PC-3 (cell line): ENCODE measurements at regions of chr1 and their contacts with region 1.

Region 1: DNA sequence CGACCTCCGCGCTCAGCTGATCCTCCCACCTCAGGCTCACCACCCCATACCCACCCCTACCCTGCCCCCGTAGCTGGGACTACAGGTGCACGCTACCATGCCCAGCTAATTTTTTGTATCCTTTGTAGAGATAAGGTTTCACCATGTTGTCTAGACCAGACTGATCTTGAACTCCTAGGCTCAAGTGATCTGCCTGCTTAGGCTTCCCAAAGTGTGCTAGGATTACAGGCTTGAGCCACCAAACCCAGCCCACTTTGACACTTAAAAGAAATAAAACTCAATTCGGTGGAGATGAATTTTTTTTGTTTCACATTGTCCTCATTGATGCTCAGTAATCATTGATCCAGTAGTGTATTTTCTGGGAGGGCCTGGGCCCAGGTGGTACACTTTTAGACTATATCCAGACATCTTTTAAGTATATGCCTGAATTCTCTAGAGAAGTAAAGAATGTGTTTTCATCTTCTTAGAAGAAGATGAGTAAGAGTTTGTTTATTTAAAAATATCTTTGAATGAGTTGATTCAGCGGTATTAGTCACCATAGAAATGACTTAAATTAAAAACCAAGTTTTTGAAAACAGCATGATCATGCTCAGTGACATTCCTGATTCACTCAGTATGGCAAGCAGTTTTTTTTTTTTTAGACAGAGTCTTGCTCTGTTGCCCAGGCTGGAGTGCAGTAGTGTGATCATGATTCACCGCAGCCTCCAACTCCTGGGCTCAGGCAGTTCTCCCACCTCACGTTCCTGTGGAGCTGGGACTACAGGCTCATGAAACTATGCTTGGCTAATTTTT is 57.8 kb downstream of the EPB41 start:
- DNase-seq: peak; percentile 94
- ATAC-seq: peak; percentile 88
- H3K4me3 ChIP-seq: no peak overlapping the region
- H3K27ac ChIP-seq: peak overlapping the region; percentile 82
- H3K4me1 ChIP-seq: peaks cover 32% of the 10 kb centered on the region
- H3K27me3 ChIP-seq: no peaks in the 10 kb centered on the region
- CTCF ChIP-seq: no peak

Region 2: GRCh38 chr1:28860332-28861073 is 111.7 kb before region 1 on chr1:
- CTCF ChIA-PET with region 1: no interaction called
- POLR2A ChIA-PET with region 1: no interaction called
- intact Hi-C with region 1: no loop called
- DNase-seq: peak; percentile 58
- ATAC-seq: peak; percentile 49; the same call in 1 of the 2 replicates
- H3K4me3 ChIP-seq: no peak overlapping the region
- H3K27ac ChIP-seq: no peak overlapping the region
- H3K4me1 ChIP-seq: no peaks in the 10 kb centered on the region
- H3K27me3 ChIP-seq: no peaks in the 10 kb centered on the region
- CTCF ChIP-seq: no peak

Region 3: GRCh38 chr1:28914228-28915030 is 57.7 kb before region 1 on chr1 and contains the start of gene EPB41:
- CTCF ChIA-PET with region 1: no interaction called
- POLR2A ChIA-PET with region 1: no interaction called
- intact Hi-C with region 1: loop called (anchors 2 kb)
- DNase-seq: peak; percentile 92
- ATAC-seq: peak; percentile 88
- H3K4me3 ChIP-seq: peak within 1 kb of the TSS; percentile 75
- H3K27ac ChIP-seq: peak within 1 kb of the TSS; percentile 28
- H3K4me1 ChIP-seq: peaks cover 14% of the 10 kb centered on the region
- H3K27me3 ChIP-seq: no peaks in the 10 kb centered on the region
- CTCF ChIP-seq: no peak
- total RNA-seq, gene EPB41: 41.5 and 44.9 TPM in 2 replicates

Region 4: DNA sequence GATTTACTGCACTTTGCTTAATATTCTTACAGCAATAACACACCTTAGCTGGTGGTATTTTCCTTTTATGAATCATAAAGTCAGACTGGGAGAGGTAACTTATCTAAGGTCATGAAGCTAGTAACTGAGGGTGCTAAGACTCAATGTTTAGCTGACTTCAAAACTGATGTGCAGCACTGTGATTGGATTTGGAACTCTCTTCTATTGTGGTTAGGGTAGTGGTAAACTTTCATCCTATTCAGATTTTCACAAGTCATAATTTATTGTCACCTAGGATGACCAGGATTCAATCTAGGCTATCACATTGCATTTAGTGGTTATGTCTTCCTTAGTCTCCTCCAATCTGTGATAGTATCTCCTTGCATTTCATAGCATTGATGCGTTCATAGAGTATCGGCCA is 38.9 kb before region 1 on chr1:
- CTCF ChIA-PET with region 1: no interaction called
- POLR2A ChIA-PET with region 1: no interaction called
- intact Hi-C with region 1: loop called (anchors 5 kb)
- DNase-seq: no peak
- ATAC-seq: no peak
- H3K4me3 ChIP-seq: no peak overlapping the region
- H3K27ac ChIP-seq: no peak overlapping the region
- H3K4me1 ChIP-seq: 0 out of 2 replicates have a peak, but pooled peaks cover 3% of the 10 kb centered on the region
- H3K27me3 ChIP-seq: no peaks in the 10 kb centered on the region
- CTCF ChIP-seq: no peak

Region 5: DNA sequence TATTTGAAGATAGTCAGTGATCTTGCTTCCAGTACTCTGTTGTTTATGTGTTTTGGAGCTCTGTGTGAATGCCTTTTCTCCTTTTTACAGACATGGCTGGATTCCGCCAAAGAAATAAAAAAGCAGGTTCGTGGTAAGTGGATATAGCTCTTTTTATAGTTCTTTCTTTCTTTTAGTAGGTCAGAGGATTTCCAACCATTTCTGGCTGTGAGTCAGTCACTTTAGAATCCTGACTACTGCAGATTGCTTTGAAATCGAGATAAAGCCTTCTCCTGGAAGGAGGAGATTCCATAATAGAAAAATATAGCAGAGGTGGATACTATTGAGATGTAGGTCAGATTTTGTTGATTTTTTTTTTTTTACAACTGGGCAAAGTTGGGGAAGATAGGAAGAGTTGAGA is 39.6 kb after region 1 on chr1:
- CTCF ChIA-PET with region 1: no interaction called
- POLR2A ChIA-PET with region 1: interaction called, 10 read pairs
- intact Hi-C with region 1: no loop called
- DNase-seq: peak; percentile 6
- ATAC-seq: no peak; the same call in 1 of the 2 replicates
- H3K4me3 ChIP-seq: no peak overlapping the region
- H3K27ac ChIP-seq: no peak overlapping the region
- H3K4me1 ChIP-seq: no peaks in the 10 kb centered on the region
- H3K27me3 ChIP-seq: no peaks in the 10 kb centered on the region
- CTCF ChIP-seq: no peak

Region 6: GRCh38 chr1:29156543-29157268 is 184.5 kb after region 1 on chr1:
- CTCF ChIA-PET with region 1: no interaction called
- POLR2A ChIA-PET with region 1: no interaction called
- intact Hi-C with region 1: no loop called
- DNase-seq: no peak
- ATAC-seq: no peak
- H3K4me3 ChIP-seq: no peak overlapping the region
- H3K27ac ChIP-seq: no peak overlapping the region
- H3K4me1 ChIP-seq: no peaks in the 10 kb centered on the region
- H3K27me3 ChIP-seq: no peaks in the 10 kb centered on the region
- CTCF ChIP-seq: no peak